ENCODE measurements at regions of chrX and their contacts with region 1.

Region 1: DNA sequence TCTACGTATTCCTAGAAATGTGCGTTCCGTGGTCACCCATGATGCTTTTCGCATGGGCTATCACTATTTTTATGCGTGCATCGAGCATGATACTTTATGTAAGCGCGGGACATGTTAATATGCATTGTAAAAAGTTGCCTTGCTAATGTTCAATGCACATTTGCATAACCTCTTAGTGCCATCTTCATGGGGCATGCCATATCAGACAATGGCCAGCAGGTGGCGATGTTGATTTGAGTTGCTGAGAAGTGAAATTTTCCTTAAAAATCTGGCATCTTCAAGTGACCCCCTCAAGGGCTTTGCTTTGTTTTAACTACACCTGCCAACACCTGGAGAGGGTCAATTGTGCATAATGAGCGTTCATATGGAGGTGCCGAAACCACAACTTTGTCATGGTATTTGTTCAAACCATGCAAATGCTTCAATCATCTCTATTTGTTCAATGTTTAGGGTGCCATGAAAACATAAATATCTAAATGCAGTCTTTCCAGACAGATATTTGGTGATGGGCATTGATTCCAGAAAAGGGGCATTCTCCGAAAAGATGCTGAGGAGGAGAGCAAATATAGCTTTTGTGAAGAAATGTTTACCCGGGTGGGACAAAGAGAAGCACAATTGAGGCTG is 833.9 kb upstream of the PRKX start:
- DNase-seq: no peak
- H3K4me3 ChIP-seq: no peak overlapping the region
- H3K27ac ChIP-seq: no peak overlapping the region
- H3K4me1 ChIP-seq: no peaks in the 10 kb centered on the region
- H3K27me3 ChIP-seq: no peaks in the 10 kb centered on the region
- CTCF ChIP-seq: peak; percentile 62 to 81 (median 80)

Region 2: GRCh38 chrX:4994855-4995254 is 447.5 kb after region 1 on chrX:
- intact Hi-C with region 1: no loop called
- DNase-seq: no peak
- H3K4me3 ChIP-seq: no peak overlapping the region
- H3K27ac ChIP-seq: no peak overlapping the region
- H3K4me1 ChIP-seq: no peaks in the 10 kb centered on the region
- H3K27me3 ChIP-seq: no peaks in the 10 kb centered on the region
- CTCF ChIP-seq: no peak

Region 3: GRCh38 chrX:5113128-5113527 is 565.8 kb after region 1 on chrX:
- intact Hi-C with region 1: loop called (anchors 2 kb)
- DNase-seq: no peak
- H3K4me3 ChIP-seq: no peak overlapping the region
- H3K27ac ChIP-seq: no peak overlapping the region
- H3K4me1 ChIP-seq: no peaks in the 10 kb centered on the region
- H3K27me3 ChIP-seq: no peaks in the 10 kb centered on the region
- CTCF ChIP-seq: peak in 1 of 3 experiments; percentile 48